Activated B cell treated with CpG ODN at 0.5 μM for 24 hours (primary cell): ENCODE measurements at regions of chr16 and their contacts with region 1.

Region 1: DNA sequence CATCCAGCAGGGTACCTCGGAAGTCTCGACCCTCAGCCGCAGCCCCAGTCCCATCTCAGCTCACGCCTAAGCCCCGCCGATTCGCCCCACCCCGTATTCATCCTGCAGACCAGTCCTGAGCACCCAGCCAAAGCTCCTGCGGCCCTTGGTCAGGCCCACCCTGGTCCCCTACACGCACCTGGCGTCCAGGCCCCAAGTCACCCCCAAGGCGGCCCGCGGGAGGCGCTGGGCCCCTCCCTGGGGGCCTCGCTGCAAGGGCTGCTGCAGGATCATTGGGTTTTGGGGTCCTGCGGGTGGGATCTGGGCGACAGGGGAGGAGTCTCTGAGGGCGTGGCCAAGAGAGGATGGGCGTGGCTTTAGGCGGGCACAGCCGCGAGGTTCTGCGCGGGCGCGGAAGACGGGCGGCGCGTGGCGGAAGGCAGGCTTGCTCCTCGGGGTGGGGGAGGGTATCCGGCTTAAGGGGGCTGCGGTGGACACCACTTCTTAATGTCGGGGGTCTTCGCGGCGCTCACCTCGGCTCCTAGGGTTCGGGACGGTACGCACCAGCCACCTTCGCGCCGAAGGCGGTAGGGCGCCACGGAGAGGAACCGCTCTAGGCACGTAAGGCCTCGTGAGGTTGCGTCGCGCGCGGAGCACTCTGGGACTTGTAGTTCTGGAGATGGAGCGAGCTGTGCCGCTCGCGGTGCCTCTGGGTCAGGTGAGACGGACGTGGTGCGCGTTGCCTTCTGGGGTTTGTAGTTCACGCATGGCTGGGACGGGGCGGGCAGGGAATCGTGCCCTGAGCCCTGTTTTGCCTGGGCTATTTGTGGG is at the starts of genes HCFC1R1 and THOC6:
- DNase-seq: peak; percentile 93
- ATAC-seq: peak; percentile 76
- H3K4me3 Mint-ChIP-seq: peak within 1 kb of the TSS; percentile 92
- H3K27ac Mint-ChIP-seq: peak within 1 kb of the TSS; percentile 99
- H3K4me1 Mint-ChIP-seq: peaks cover 45% of the 10 kb centered on the region
- H3K27me3 Mint-ChIP-seq: peaks cover 1% of the 10 kb centered on the region
- CTCF ChIP-seq: no peak
- total RNA-seq, gene HCFC1R1: 17.7 and 20.4 TPM in 2 replicates
- total RNA-seq, gene THOC6: 45.8 and 47.1 TPM in 2 replicates

Region 2: DNA sequence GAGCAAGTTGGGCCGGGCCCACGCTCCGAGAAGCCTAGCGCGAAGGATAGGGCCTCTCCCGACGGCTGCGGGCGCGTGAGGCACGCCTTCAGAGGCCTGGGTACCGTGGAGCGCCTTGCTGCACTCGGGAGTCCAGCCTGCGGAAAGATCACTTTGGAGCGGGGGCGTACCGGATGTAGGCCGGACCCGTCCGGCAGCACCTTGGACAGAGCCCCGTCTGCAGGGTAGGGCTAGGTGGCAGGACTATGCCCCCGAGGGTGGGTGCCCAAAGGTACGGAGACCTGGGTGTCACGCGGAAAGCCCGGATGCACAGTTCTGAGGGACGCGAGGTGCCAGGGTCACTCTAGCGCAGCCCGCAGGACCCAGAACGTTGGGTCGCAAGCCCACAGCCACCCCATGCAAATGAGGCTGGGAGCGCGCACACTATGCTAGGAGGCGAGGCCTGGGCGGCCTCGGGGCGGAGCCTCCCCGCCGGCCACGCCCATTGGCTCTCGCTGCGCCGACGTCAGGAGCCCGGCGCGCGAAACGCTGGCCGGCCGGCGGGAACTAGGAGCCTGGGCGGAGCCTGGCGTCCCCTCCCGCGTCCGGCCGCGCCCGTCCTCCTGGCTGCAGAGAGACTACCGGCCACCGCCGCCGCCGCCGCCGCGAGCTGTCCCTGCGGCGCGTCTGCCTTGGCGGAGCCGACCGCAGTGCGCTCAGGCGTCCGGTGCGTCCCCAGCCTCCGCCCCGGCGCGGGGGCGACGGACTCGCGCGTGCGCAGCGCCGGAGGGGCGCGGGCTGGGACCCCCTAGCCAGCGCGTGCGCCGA is 54.9 kb before region 1 on chr16 and contains the start of gene PAQR4:
- CTCF ChIA-PET with region 1: interaction called, 5 read pairs
- POLR2A ChIA-PET with region 1: no interaction called
- intact Hi-C with region 1: loop called (anchors 1 kb)
- DNase-seq: peak; percentile 86
- ATAC-seq: peak; percentile 80
- H3K4me3 Mint-ChIP-seq: peak within 1 kb of the TSS; percentile 77
- H3K27ac Mint-ChIP-seq: peak within 1 kb of the TSS; percentile 18
- H3K4me1 Mint-ChIP-seq: peaks cover 24% of the 10 kb centered on the region
- H3K27me3 Mint-ChIP-seq: peaks cover 12% of the 10 kb centered on the region
- CTCF ChIP-seq: no peak
- total RNA-seq, gene PAQR4: 2.4 and 2.7 TPM in 2 replicates

Region 3: GRCh38 chr16:3003582-3004302 is 20.1 kb before region 1 on chr16:
- CTCF ChIA-PET with region 1: interaction called, 62 read pairs
- POLR2A ChIA-PET with region 1: interaction called, 40 read pairs
- intact Hi-C with region 1: loop called (anchors 1 kb)
- DNase-seq: peak; percentile 87
- ATAC-seq: peak; percentile 98
- H3K4me3 Mint-ChIP-seq: peak overlapping the region; percentile 67
- H3K27ac Mint-ChIP-seq: peak overlapping the region; percentile 53
- H3K4me1 Mint-ChIP-seq: peaks cover 28% of the 10 kb centered on the region
- H3K27me3 Mint-ChIP-seq: peaks cover 11% of the 10 kb centered on the region
- CTCF ChIP-seq: no peak

Region 4: GRCh38 chr16:3106205-3106928 is 82.5 kb after region 1 on chr16:
- CTCF ChIA-PET with region 1: no interaction called
- POLR2A ChIA-PET with region 1: interaction called, 3 read pairs
- intact Hi-C with region 1: loop called (anchors 1 kb)
- DNase-seq: peak; percentile 84
- ATAC-seq: peak; percentile 96
- H3K4me3 Mint-ChIP-seq: peak overlapping the region; percentile 79
- H3K27ac Mint-ChIP-seq: peak overlapping the region; percentile 73
- H3K4me1 Mint-ChIP-seq: peaks cover 27% of the 10 kb centered on the region
- H3K27me3 Mint-ChIP-seq: peaks cover 1% of the 10 kb centered on the region
- CTCF ChIP-seq: no peak

Region 5: GRCh38 chr16:3134564-3135417 is 110.9 kb after region 1 on chr16 and contains the start of gene ZNF213:
- CTCF ChIA-PET with region 1: interaction called, 87 read pairs
- POLR2A ChIA-PET with region 1: interaction called, 9 read pairs
- intact Hi-C with region 1: loop called (anchors 1 kb)
- DNase-seq: peak; percentile 81
- ATAC-seq: peak; percentile 99
- H3K4me3 Mint-ChIP-seq: peak within 1 kb of the TSS; percentile 97
- H3K27ac Mint-ChIP-seq: peak within 1 kb of the TSS; percentile 97
- H3K4me1 Mint-ChIP-seq: peaks cover 24% of the 10 kb centered on the region
- H3K27me3 Mint-ChIP-seq: no peaks in the 10 kb centered on the region
- CTCF ChIP-seq: no peak
- total RNA-seq, gene ZNF213: 5.6 and 5.7 TPM in 2 replicates

Region 6: DNA sequence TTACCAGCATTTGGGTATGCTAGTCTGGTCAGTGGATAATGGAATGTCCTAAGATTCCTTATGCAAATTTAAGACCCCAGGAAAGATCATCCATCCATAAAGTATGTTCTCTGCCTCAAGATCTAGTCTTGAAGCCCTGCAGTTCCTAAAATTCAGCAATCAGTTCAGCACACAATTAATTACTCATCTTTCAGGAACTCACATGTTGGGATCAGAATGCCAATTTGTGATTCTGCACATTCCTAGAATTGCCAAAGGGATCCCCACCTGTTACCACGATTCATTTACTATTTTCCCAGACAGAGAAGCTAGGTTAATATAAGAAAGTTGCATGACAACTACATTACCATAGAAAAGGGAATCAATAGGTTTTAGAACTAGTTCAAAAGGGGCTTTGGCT is 335.0 kb after region 1 on chr16:
- CTCF ChIA-PET with region 1: no interaction called
- POLR2A ChIA-PET with region 1: no interaction called
- intact Hi-C with region 1: no loop called
- DNase-seq: no peak
- ATAC-seq: no peak
- H3K4me3 Mint-ChIP-seq: no peak overlapping the region
- H3K27ac Mint-ChIP-seq: no peak overlapping the region
- H3K4me1 Mint-ChIP-seq: no peaks in the 10 kb centered on the region
- H3K27me3 Mint-ChIP-seq: peaks cover 9% of the 10 kb centered on the region
- CTCF ChIP-seq: no peak